Activated CD4-positive, alpha-beta T cell treated with anti-CD3 and anti-CD28 coated beads for 36 hours (primary cell): ENCODE measurements at regions of chr14 and their contacts with region 1.

Region 1: DNA sequence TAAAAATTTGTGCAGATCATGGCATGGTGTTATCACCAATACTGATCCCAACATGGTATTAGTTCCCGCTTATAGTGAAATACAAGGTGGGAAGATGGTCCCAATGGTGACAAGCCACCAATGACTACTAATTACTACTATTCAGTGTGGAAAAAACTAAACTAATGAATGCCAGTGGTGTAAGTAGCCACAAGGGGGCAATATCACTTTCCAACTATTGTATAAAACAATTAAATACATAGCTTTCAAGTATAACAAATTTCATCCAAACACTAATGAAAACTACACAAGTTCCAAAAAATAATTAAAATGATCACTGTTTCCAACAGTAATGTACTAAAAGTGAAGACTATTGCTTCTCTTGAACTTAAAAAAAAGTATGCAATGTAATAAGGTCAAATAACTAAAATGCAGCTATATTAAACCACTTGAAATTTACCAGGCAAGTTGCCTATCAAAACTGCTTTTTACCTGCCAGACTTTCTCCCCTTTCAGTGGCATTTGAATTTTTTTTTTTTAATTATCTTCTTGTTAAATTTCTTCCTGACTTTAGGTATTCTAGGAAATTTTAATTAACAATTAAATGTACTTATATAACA is 58.0 kb downstream of the PAPLN start:
- DNase-seq: no peak
- ATAC-seq: no peak
- H3K4me3 Mint-ChIP-seq: no peak overlapping the region
- H3K27ac Mint-ChIP-seq: no peak overlapping the region
- H3K4me1 Mint-ChIP-seq: peaks cover 18% of the 10 kb centered on the region
- H3K27me3 Mint-ChIP-seq: no peaks in the 10 kb centered on the region

Region 2: GRCh38 chr14:73258845-73259611 is 36.3 kb before region 1 on chr14:
- CTCF ChIA-PET with region 1: no interaction called
- POLR2A ChIA-PET with region 1: no interaction called
- intact Hi-C with region 1: no loop called
- DNase-seq: peak; percentile 3
- ATAC-seq: no peak
- H3K4me3 Mint-ChIP-seq: no peak overlapping the region
- H3K27ac Mint-ChIP-seq: no peak overlapping the region
- H3K4me1 Mint-ChIP-seq: peaks cover 3% of the 10 kb centered on the region
- H3K27me3 Mint-ChIP-seq: peaks cover 2% of the 10 kb centered on the region

Region 3: DNA sequence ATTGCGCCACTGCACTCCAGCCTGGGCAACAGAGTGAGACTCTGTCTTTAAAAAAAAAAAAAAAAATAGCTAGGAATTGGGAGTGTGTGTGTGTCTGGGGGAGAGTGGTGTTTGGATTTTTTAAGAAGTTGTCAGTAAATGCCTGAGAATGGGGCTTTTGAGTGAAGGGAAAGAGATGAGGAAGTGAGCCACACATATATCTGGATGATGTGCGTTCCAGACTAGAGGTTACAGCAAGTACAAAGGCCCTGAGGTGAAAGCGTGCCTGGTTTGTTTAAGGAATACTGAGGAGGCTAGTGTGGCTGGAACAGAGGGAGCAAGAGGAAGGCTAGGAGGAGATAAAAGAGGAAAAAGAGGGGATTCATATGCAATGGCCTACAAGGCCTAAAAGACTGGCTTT is 12.0 kb after region 1 on chr14:
- CTCF ChIA-PET with region 1: interaction called, 10 read pairs
- POLR2A ChIA-PET with region 1: no interaction called
- intact Hi-C with region 1: no loop called
- DNase-seq: no peak
- ATAC-seq: no peak
- H3K4me3 Mint-ChIP-seq: no peak overlapping the region
- H3K27ac Mint-ChIP-seq: no peak overlapping the region
- H3K4me1 Mint-ChIP-seq: peaks cover 8% of the 10 kb centered on the region
- H3K27me3 Mint-ChIP-seq: no peaks in the 10 kb centered on the region

Region 4: GRCh38 chr14:73463411-73463810 is 168.1 kb after region 1 on chr14:
- CTCF ChIA-PET with region 1: interaction called, 12 read pairs
- POLR2A ChIA-PET with region 1: interaction called, 4 read pairs
- intact Hi-C with region 1: loop called in 1 of 2 experiments (anchors 1 kb)
- DNase-seq: peak; percentile 73
- ATAC-seq: peak; percentile 56
- H3K4me3 Mint-ChIP-seq: peak overlapping the region; percentile 53
- H3K27ac Mint-ChIP-seq: peak overlapping the region; percentile 94
- H3K4me1 Mint-ChIP-seq: peaks cover 63% of the 10 kb centered on the region
- H3K27me3 Mint-ChIP-seq: no peaks in the 10 kb centered on the region

Region 5: GRCh38 chr14:73633116-73634010 is 338.1 kb after region 1 on chr14:
- CTCF ChIA-PET with region 1: interaction called, 3 read pairs
- POLR2A ChIA-PET with region 1: no interaction called
- intact Hi-C with region 1: loop called in 1 of 2 experiments (anchors 10 kb)
- DNase-seq: peak; percentile 74
- ATAC-seq: peak; percentile 82
- H3K4me3 Mint-ChIP-seq: peak overlapping the region; percentile 49
- H3K27ac Mint-ChIP-seq: peak overlapping the region; percentile 37
- H3K4me1 Mint-ChIP-seq: peaks cover 5% of the 10 kb centered on the region
- H3K27me3 Mint-ChIP-seq: peaks cover 12% of the 10 kb centered on the region

Region 6: GRCh38 chr14:73903028-73903427 is 607.7 kb after region 1 on chr14:
- CTCF ChIA-PET with region 1: no interaction called
- POLR2A ChIA-PET with region 1: no interaction called
- intact Hi-C with region 1: no loop called
- DNase-seq: no peak
- ATAC-seq: no peak
- H3K4me3 Mint-ChIP-seq: no peak overlapping the region
- H3K27ac Mint-ChIP-seq: no peak overlapping the region
- H3K4me1 Mint-ChIP-seq: no peaks in the 10 kb centered on the region
- H3K27me3 Mint-ChIP-seq: no peaks in the 10 kb centered on the region